B cell (primary cell): ENCODE measurements at regions of chr13 and their contacts with region 1.

Region 1: GRCh38 chr13:98842864-98843481 is 90.5 kb upstream of the SLC15A1 start:
- DNase-seq: peak; percentile 68
- ATAC-seq: peak; percentile 79
- H3K4me3 ChIP-seq: no peak overlapping the region
- H3K4me3 Mint-ChIP-seq: no peak overlapping the region
- H3K27ac ChIP-seq: no peak overlapping the region
- H3K27ac Mint-ChIP-seq: no peak overlapping the region
- H3K4me1 ChIP-seq: no peaks in the 10 kb centered on the region
- H3K4me1 Mint-ChIP-seq: peaks cover 2% of the 10 kb centered on the region
- H3K27me3 ChIP-seq: no peaks in the 10 kb centered on the region
- H3K27me3 Mint-ChIP-seq: no peaks in the 10 kb centered on the region
- CTCF ChIP-seq: peak; percentile 86

Region 2: GRCh38 chr13:98641075-98641474 is 201.9 kb before region 1 on chr13:
- CTCF ChIA-PET with region 1: no interaction called
- POLR2A ChIA-PET with region 1: no interaction called
- intact Hi-C with region 1: no loop called
- DNase-seq: no peak
- ATAC-seq: no peak
- H3K4me3 ChIP-seq: no peak overlapping the region
- H3K4me3 Mint-ChIP-seq: no peak overlapping the region
- H3K27ac ChIP-seq: no peak overlapping the region
- H3K27ac Mint-ChIP-seq: no peak overlapping the region
- H3K4me1 ChIP-seq: no peaks in the 10 kb centered on the region
- H3K4me1 Mint-ChIP-seq: no peaks in the 10 kb centered on the region
- H3K27me3 ChIP-seq: no peaks in the 10 kb centered on the region
- H3K27me3 Mint-ChIP-seq: peaks cover 28% of the 10 kb centered on the region
- CTCF ChIP-seq: no peak

Region 3: GRCh38 chr13:99033814-99034213 is 190.8 kb after region 1 on chr13:
- CTCF ChIA-PET with region 1: no interaction called
- POLR2A ChIA-PET with region 1: no interaction called
- intact Hi-C with region 1: loop called (anchors 5 kb)
- DNase-seq: no peak
- ATAC-seq: no peak
- H3K4me3 ChIP-seq: no peak overlapping the region
- H3K4me3 Mint-ChIP-seq: no peak overlapping the region
- H3K27ac ChIP-seq: no peak overlapping the region
- H3K27ac Mint-ChIP-seq: no peak overlapping the region
- H3K4me1 ChIP-seq: no peaks in the 10 kb centered on the region
- H3K4me1 Mint-ChIP-seq: peaks cover 2% of the 10 kb centered on the region
- H3K27me3 ChIP-seq: no peaks in the 10 kb centered on the region
- H3K27me3 Mint-ChIP-seq: no peaks in the 10 kb centered on the region
- CTCF ChIP-seq: no peak